ENCODE measurements at regions of chr22 and their contacts with region 1.

Region 1: DNA sequence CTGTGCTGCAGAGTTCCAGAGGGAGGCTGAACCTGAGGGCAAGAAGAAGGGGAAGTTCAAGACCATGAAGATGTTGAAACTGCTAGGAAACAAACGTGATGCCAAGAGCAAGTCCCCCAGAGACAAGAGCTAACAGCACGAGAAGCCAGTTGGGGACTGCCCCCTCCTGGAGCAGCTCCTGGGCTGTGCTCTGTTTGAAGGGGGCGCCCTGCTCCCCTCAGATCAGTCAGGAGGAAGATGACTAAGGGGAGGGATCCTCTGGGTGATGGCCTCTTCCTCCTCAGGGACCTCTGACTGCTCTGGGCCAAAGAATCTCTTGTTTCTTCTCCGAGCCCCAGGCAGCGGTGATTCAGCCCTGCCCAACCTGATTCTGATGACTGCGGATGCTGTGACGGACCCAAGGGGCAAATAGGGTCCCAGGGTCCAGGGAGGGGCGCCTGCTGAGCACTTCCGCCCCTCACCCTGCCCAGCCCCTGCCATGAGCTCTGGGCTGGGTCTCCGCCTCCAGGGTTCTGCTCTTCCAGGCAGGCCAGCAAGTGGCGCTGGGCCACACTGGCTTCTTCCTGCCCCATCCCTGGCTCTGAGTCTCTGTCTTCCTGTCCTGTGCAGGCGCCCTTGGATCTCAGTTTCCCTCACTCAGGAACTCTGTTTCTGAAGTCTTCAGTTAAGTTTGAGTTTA is 12.6 kb downstream of the C22orf23 start:
- DNase-seq: no peak
- ATAC-seq: no peak
- H3K4me3 ChIP-seq: no peak overlapping the region
- H3K27ac ChIP-seq: no peak overlapping the region
- H3K4me1 ChIP-seq: no peaks in the 10 kb centered on the region
- H3K27me3 ChIP-seq: no peaks in the 10 kb centered on the region
- CTCF ChIP-seq: no peak

Region 2: GRCh38 chr22:37681556-37682049 is 259.2 kb before region 1 on chr22:
- CTCF ChIA-PET with region 1: no interaction called
- POLR2A ChIA-PET with region 1: interaction called, 10 read pairs
- in situ Hi-C with region 1: no loop called
- intact Hi-C with region 1: no loop called
- DNase-seq: peak; percentile 58
- ATAC-seq: peak; percentile 71
- H3K4me3 ChIP-seq: no peak overlapping the region
- H3K27ac ChIP-seq: peak overlapping the region; percentile 59
- H3K4me1 ChIP-seq: peaks cover 32% of the 10 kb centered on the region
- H3K27me3 ChIP-seq: no peaks in the 10 kb centered on the region
- CTCF ChIP-seq: peak; percentile 91

Region 3: GRCh38 chr22:38176170-38176741 is 235.4 kb after region 1 on chr22:
- CTCF ChIA-PET with region 1: no interaction called
- POLR2A ChIA-PET with region 1: no interaction called
- in situ Hi-C with region 1: no loop called
- intact Hi-C with region 1: no loop called
- DNase-seq: no peak
- ATAC-seq: peak; percentile 43; the same call in 1 of the 2 replicates
- H3K4me3 ChIP-seq: no peak overlapping the region
- H3K27ac ChIP-seq: peak overlapping the region; percentile 48
- H3K4me1 ChIP-seq: peaks cover 52% of the 10 kb centered on the region
- H3K27me3 ChIP-seq: no peaks in the 10 kb centered on the region
- CTCF ChIP-seq: no peak

Measured in Panc1 (cell line).